CD14-positive monocyte (primary cell): ENCODE measurements at regions of chr22 and their contacts with region 1.

Region 1: GRCh38 chr22:36977947-36978660 is 41.1 kb downstream of the TST start:
- DNase-seq: peak; percentile 85 to 93 (median 91)
- H3K4me3 ChIP-seq: peak overlapping the region; percentile 28 to 68 (median 47)
- H3K4me3 Mint-ChIP-seq: peak overlapping the region; percentile 81 to 91
- H3K27ac ChIP-seq: peak overlapping the region; percentile 43 to 64
- H3K27ac Mint-ChIP-seq: peak overlapping the region; percentile 81 to 92 (median 90)
- H3K4me1 ChIP-seq: peaks cover 7 to 13% of the 10 kb centered on the region in 2 donors
- H3K4me1 Mint-ChIP-seq: peaks cover 20% of the 10 kb centered on the region
- H3K27me3 ChIP-seq: no peaks in the 10 kb centered on the region
- H3K27me3 Mint-ChIP-seq: peaks cover 8 to 12% (median 10%) of the 10 kb centered on the region in 3 donors
- CTCF ChIP-seq: peak; percentile 93

Region 2: DNA sequence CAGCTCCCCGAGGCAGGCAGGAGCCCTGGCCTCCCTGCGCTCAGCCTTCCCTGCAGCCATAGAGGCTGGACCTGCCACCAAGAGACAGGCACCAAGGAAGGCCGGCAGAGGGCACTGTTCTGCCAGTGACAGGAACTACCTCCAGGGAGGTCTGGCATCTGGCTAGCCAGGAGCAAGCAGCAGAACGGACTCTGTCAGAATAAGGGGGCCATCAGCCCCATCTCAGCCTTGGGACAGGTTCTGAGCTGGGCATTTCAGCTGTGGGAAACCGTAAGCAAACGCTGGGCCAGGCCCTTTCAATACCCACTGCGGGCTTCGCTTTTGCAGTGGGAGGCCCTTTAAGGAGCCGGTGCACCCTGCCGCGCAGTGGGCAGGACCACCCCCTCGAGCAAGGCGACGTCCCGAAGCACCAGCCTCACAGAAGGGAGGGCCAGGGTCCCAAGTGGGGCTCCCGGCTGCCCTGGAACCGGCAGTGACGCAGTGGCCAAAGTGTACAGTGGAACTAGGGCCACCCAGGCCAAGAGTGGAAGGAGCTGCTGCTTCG is 220.4 kb before region 1 on chr22:
- intact Hi-C with region 1: loop called in 1 of 2 experiments (anchors 2 kb)
- DNase-seq: peak; percentile 61 to 77 (median 76)
- H3K4me3 ChIP-seq: no peak overlapping the region
- H3K4me3 Mint-ChIP-seq: no peak overlapping the region
- H3K27ac ChIP-seq: no peak overlapping the region
- H3K27ac Mint-ChIP-seq: no peak overlapping the region
- H3K4me1 ChIP-seq: peaks cover 8% of the 10 kb centered on the region in 2 donors
- H3K4me1 Mint-ChIP-seq: peaks cover 9% of the 10 kb centered on the region
- H3K27me3 ChIP-seq: no peaks in the 10 kb centered on the region
- H3K27me3 Mint-ChIP-seq: peaks cover 14 to 29% (median 15%) of the 10 kb centered on the region in 3 donors
- CTCF ChIP-seq: peak; percentile 95

Region 3: DNA sequence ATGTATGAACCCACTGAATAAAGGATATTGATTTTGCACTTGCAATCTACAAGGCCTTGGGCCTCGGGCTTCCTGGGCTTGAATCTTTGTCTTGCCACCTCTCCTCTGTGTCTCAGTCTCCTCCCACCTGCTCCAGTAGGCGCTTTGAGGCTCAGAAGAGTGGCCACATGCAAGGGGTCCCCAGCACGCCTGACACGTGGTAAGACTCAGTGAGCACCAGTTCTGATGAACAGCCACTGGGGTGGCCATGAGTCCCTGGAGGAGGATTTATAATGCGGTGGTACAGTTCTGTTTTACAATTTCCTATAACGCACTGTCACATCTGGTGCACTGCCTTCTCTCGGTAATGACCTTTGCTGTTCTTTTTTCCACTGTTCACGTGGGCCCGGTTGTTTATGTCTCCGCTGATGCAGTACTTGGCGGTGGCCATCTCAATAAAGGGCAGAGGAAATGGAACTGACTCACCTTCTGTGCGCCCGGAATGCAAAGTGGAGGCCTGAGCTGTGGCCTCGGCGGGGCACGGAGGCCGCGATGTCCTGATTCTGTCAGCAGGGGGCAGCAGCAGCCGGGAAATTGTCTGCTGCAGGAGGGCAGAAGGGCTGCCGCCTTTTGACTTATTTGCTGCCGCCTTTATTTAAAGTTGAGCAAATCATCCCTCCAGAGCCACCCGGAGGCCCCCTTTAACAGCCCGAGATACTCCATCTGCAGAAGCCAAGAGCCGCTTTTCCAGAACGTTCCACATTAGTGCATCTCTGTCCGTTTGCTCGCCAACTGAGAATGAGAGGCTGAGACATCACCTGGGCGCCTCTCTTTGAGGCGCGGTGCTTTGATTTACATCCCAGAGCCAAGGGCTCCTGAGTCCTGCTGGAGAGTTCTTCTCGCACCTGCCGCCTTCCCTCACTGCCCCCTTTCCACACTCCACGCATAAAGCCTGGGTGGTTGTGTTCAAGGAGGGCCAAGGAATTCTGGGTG is 196.2 kb before region 1 on chr22:
- intact Hi-C with region 1: loop called (anchors 2 kb)
- DNase-seq: peak; percentile 78 to 88 (median 78)
- H3K4me3 ChIP-seq: no peak overlapping the region
- H3K4me3 Mint-ChIP-seq: peak overlapping the region in 1 of 2 donors; percentile 37
- H3K27ac ChIP-seq: no peak overlapping the region
- H3K27ac Mint-ChIP-seq: peak overlapping the region in 2 of 7 donors; percentile 57 to 63
- H3K4me1 ChIP-seq: peaks cover 3 to 7% of the 10 kb centered on the region in 2 donors
- H3K4me1 Mint-ChIP-seq: peaks cover 10% of the 10 kb centered on the region
- H3K27me3 ChIP-seq: peaks cover 0 to 6% of the 10 kb centered on the region in 2 donors
- H3K27me3 Mint-ChIP-seq: peaks cover 10 to 28% (median 27%) of the 10 kb centered on the region in 3 donors
- CTCF ChIP-seq: peak; percentile 94

Region 4: GRCh38 chr22:36856121-36856791 is 121.8 kb before region 1 on chr22:
- intact Hi-C with region 1: loop called (anchors 5 kb)
- DNase-seq: peak; percentile 89 to 92 (median 90)
- H3K4me3 ChIP-seq: peak overlapping the region in 1 of 3 experiments; percentile 39
- H3K4me3 Mint-ChIP-seq: peak overlapping the region; percentile 39 to 94
- H3K27ac ChIP-seq: no peak overlapping the region
- H3K27ac Mint-ChIP-seq: peak overlapping the region in 3 of 7 donors; percentile 59 to 91 (median 74)
- H3K4me1 ChIP-seq: peaks cover 58 to 67% of the 10 kb centered on the region in 2 donors
- H3K4me1 Mint-ChIP-seq: peaks cover 60% of the 10 kb centered on the region
- H3K27me3 ChIP-seq: peaks cover 0 to 4% of the 10 kb centered on the region in 2 donors
- H3K27me3 Mint-ChIP-seq: peaks cover under 1 to 3% (median 2%) of the 10 kb centered on the region in 3 donors
- CTCF ChIP-seq: peak; percentile 100

Region 5: DNA sequence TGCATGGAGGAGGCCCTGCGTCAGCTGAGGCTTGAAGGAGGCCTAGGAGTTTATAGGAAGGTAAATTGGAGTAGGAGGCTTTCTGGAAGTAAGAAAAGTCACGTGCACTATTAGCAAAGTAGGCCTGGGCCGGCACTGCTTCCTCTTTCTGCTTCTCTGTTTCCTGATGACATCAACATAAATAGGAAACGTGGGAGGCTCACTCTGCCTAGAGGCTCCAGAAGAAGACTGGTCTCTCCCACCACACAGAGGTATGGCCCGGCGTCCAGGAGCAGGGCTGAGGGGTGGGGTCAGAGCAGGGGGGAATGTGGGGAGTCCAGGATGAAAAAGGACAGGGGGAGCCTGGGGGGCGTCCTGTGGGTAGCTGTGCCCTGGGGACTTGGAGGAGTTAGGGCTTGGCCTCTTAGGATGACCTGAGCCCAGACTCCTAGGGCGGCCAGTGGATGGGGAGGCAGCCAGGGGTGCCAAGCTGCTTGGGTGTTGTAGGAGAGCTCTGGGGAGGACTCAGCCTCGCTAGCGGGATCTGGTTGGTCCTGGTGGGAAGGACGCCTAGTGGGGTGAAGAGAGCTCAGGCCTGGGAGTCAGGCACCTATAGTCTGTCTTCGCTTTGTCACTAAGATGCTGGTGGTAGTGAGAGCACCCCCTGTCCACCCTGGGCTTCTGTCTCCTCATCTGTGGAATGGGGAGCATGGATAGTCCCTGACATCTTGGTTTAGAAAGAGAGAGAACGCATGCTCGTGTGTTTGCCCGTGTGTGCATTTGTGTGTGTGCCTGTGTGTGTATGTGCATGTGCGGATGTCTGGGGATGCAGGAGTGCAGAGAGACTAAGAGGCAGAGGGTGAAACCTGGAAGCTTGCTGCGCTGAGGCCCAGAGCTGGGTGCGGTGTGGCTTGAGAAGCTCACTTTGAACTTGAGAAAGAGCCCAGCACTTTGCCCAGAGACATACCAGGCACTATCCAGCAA is 64.4 kb before region 1 on chr22 and contains the start of gene CSF2RB:
- intact Hi-C with region 1: loop called in 1 of 2 experiments (anchors 10 kb)
- DNase-seq: peak; percentile 85 to 96 (median 92)
- H3K4me3 ChIP-seq: peak within 1 kb of the TSS; percentile 53 to 84 (median 63)
- H3K4me3 Mint-ChIP-seq: peak within 1 kb of the TSS; percentile 87 to 97
- H3K27ac ChIP-seq: peak within 1 kb of the TSS; percentile 86 to 96
- H3K27ac Mint-ChIP-seq: peak within 1 kb of the TSS; percentile 92 to 99 (median 97)
- H3K4me1 ChIP-seq: peaks cover 31 to 62% of the 10 kb centered on the region in 2 donors
- H3K4me1 Mint-ChIP-seq: peaks cover 58% of the 10 kb centered on the region
- H3K27me3 ChIP-seq: no peaks in the 10 kb centered on the region
- H3K27me3 Mint-ChIP-seq: peaks cover 0 to 5% (median 0%) of the 10 kb centered on the region in 3 donors
- CTCF ChIP-seq: no peak
- polyA plus RNA-seq, gene CSF2RB: 29.9 to 91.1 (median 52.7) TPM